CD4-positive, alpha-beta memory T cell (primary cell): ENCODE measurements at regions of chr4 and their contacts with region 1.

Region 1: GRCh38 chr4:121370729-121371325 is 10.0 kb downstream of the QRFPR start:
- DNase-seq: peak in 4 of 5 donors; percentile 10 to 22 (median 18)
- H3K4me3 ChIP-seq: no peak overlapping the region
- H3K4me3 Mint-ChIP-seq: no peak overlapping the region
- H3K27ac ChIP-seq: no peak overlapping the region
- H3K27ac Mint-ChIP-seq: no peak overlapping the region
- H3K4me1 ChIP-seq: no peaks in the 10 kb centered on the region
- H3K4me1 Mint-ChIP-seq: no peaks in the 10 kb centered on the region
- H3K27me3 ChIP-seq: no peaks in the 10 kb centered on the region
- H3K27me3 Mint-ChIP-seq: peaks cover 12 to 16% of the 10 kb centered on the region in 2 donors

Region 2: DNA sequence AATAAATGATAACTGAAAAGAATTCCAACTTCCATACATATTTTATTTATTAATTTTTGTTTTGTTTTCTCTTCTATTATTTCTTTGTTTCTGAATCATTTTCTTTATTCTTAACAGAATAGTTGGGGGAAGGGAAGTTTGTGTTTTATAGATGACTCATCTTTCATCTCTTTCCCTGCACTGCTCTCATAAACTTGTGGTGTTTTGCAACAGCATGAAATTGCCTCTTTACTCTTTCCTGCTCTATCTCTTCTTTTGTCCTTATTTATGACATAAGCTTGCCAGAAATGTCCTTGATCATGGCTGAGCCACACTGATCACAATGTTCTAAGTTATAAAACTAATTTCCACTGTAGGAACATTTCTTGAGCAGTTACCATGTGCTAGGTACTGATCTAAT is 12.4 kb before region 1 on chr4:
- CTCF ChIA-PET with region 1: interaction called, 11 read pairs
- POLR2A ChIA-PET with region 1: no interaction called
- intact Hi-C with region 1: no loop called
- DNase-seq: no peak
- H3K4me3 ChIP-seq: no peak overlapping the region
- H3K4me3 Mint-ChIP-seq: no peak overlapping the region
- H3K27ac ChIP-seq: no peak overlapping the region
- H3K27ac Mint-ChIP-seq: no peak overlapping the region
- H3K4me1 ChIP-seq: no peaks in the 10 kb centered on the region
- H3K4me1 Mint-ChIP-seq: no peaks in the 10 kb centered on the region
- H3K27me3 ChIP-seq: peaks cover 4% of the 10 kb centered on the region
- H3K27me3 Mint-ChIP-seq: peaks cover 8 to 19% of the 10 kb centered on the region in 2 donors

Region 3: GRCh38 chr4:121736735-121737351 is 366.0 kb after region 1 on chr4:
- CTCF ChIA-PET with region 1: interaction called, 15 read pairs
- POLR2A ChIA-PET with region 1: no interaction called
- intact Hi-C with region 1: no loop called
- DNase-seq: peak in 4 of 5 donors; percentile 6 to 12 (median 10)
- H3K4me3 ChIP-seq: no peak overlapping the region
- H3K4me3 Mint-ChIP-seq: no peak overlapping the region
- H3K27ac ChIP-seq: no peak overlapping the region
- H3K27ac Mint-ChIP-seq: no peak overlapping the region
- H3K4me1 ChIP-seq: no peaks in the 10 kb centered on the region
- H3K4me1 Mint-ChIP-seq: no peaks in the 10 kb centered on the region
- H3K27me3 ChIP-seq: no peaks in the 10 kb centered on the region
- H3K27me3 Mint-ChIP-seq: peaks cover 7% of the 10 kb centered on the region in 2 donors